ENCODE measurements at regions of chr10 and their contacts with region 1.

Region 1: DNA sequence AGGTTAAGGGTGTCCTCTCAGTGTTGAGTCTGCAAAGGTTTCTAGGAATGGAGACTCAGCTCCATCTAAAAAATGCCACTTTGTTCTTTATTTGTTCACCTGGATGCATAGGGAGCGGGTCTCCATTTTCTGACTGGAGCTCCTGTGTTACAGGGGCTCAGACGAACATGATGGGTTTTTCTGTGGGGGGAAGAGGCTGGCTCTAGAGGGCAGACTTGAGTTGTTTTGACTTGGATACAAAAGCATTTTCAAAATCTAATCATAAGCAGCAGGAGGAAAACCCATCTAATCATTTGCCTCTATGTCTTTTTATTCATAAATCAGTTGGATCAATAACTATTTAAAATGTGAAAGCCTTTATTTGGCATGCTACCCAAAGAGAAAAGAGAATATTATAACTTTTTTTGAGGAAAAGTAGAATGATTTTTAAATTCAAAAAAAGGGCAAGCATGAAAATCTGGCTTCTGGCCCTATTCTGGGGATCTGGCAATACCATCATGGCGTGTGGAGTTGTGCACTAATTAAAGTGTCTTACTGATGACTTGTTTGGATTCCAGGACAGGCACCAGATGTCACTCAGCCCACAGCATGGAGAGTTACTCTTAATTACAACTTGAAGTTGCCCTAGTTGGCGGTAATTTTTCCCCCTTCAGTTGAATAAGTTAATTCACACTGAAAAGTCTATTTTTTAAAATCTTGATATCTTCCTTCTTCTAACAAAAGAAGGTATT is 594.9 kb downstream of the REEP3 start:
- DNase-seq: peak; percentile 54
- H3K4me3 Mint-ChIP-seq: no peak overlapping the region
- H3K27ac Mint-ChIP-seq: no peak overlapping the region
- H3K4me1 Mint-ChIP-seq: peaks cover 26% of the 10 kb centered on the region
- H3K27me3 Mint-ChIP-seq: no peaks in the 10 kb centered on the region
- CTCF ChIP-seq: peak; percentile 40

Region 2: DNA sequence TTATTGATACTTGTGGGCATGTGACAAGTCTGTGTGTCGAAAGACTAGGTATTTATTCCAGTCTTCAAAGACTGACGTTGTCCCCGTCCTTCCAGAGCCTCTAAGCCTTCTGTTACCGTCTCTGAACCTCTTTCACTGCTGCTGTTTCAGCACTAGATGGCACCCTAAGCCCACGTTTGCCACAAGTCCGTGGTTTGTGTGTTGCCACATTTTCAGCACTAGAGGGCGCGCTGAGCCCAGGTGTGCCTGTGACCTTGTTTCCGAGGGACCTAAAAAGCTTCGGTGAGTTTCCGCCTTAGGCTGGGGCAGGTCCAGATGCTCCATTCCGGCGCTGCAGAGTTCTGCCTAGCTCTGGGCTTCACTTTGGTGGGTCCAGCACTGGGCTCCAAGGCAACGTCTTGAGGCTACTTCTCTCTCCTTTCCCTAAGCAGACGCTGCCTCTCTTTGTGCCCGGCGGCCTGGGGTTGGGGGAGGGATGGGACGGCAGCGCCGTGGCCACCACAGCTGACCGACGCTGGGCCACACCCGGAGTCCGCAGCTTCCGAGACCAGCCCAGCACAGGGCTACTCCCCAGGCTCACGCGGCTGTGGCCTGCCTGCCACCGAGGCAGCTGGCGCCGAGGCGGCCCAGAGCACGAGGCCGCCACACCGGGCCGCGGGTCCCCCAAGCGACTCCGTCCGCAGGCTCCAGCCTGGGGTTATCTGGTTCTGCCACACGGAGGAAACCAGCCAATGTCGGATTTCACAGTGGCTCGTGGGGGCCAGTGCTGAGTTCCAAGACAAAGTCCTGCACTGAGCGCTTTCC is 74.7 kb before region 1 on chr10:
- CTCF ChIA-PET with region 1: interaction called, 3 read pairs
- intact Hi-C with region 1: loop called (anchors 5 kb)
- DNase-seq: peak; percentile 80
- H3K4me3 Mint-ChIP-seq: peak overlapping the region; percentile 53
- H3K27ac Mint-ChIP-seq: no peak overlapping the region
- H3K4me1 Mint-ChIP-seq: peaks cover 8% of the 10 kb centered on the region
- H3K27me3 Mint-ChIP-seq: peaks cover 3% of the 10 kb centered on the region
- CTCF ChIP-seq: peak; percentile 99